Activated B cell treated with CpG ODN at 0.5 μM for 24 hours (primary cell): ENCODE measurements at regions of chr4 and their contacts with region 1.

Region 1: GRCh38 chr4:118772081-118772766 is 63.7 kb downstream of the SEC24D start:
- DNase-seq: no peak
- ATAC-seq: peak; percentile 71
- H3K4me3 Mint-ChIP-seq: no peak overlapping the region
- H3K27ac Mint-ChIP-seq: no peak overlapping the region
- H3K4me1 Mint-ChIP-seq: peaks cover 2% of the 10 kb centered on the region
- H3K27me3 Mint-ChIP-seq: no peaks in the 10 kb centered on the region
- CTCF ChIP-seq: peak; percentile 24

Region 2: DNA sequence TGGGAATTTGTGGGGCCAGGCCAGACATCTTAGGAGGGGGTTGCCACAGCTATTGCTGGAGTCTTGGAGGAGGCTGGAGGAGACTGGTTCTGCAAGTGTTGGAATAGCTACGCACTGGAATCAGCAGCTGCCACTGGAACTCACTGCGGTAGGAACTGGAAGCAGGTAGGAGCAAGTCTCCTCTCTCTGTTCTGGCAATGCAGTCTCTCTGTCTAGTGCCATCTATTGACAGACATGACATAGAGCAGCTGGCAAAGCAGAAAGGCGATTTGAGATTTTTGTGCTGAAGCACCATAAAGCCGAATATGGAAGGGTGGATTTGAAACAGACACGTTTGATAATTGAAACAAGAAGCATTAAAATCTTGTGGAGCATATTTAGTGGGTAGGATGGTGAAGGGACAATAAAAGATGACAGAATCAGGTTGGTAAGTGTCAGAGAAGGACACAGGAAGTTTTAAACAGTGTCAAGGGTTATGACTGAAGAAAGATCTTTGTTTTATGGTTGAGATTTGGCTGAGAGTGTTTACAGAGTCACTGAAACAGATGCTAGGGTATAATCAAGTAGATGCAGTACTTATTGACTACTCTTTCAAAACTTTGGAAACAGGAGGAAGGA is 93.0 kb after region 1 on chr4:
- CTCF ChIA-PET with region 1: interaction called, 8 read pairs
- POLR2A ChIA-PET with region 1: no interaction called
- intact Hi-C with region 1: loop called (anchors 1 kb)
- DNase-seq: no peak
- ATAC-seq: no peak
- H3K4me3 Mint-ChIP-seq: no peak overlapping the region
- H3K27ac Mint-ChIP-seq: no peak overlapping the region
- H3K4me1 Mint-ChIP-seq: no peaks in the 10 kb centered on the region
- H3K27me3 Mint-ChIP-seq: no peaks in the 10 kb centered on the region
- CTCF ChIP-seq: no peak

Region 3: GRCh38 chr4:118888666-118889311 is 116.6 kb after region 1 on chr4 and contains the start of gene SYNPO2:
- CTCF ChIA-PET with region 1: interaction called, 49 read pairs
- POLR2A ChIA-PET with region 1: no interaction called
- intact Hi-C with region 1: loop called (anchors 1 kb)
- DNase-seq: peak; percentile 22
- ATAC-seq: peak; percentile 47
- H3K4me3 Mint-ChIP-seq: peak within 1 kb of the TSS; percentile 75
- H3K27ac Mint-ChIP-seq: no peak within 1 kb of the TSS
- H3K4me1 Mint-ChIP-seq: peaks cover 16% of the 10 kb centered on the region
- H3K27me3 Mint-ChIP-seq: peaks cover 37% of the 10 kb centered on the region
- CTCF ChIP-seq: no peak
- total RNA-seq, gene SYNPO2: 0.18 and 0.24 TPM in 2 replicates

Region 4: GRCh38 chr4:118981839-118982381 is 209.7 kb after region 1 on chr4:
- CTCF ChIA-PET with region 1: no interaction called
- POLR2A ChIA-PET with region 1: no interaction called
- intact Hi-C with region 1: loop called (anchors 1 kb)
- DNase-seq: no peak
- ATAC-seq: peak; percentile 57
- H3K4me3 Mint-ChIP-seq: no peak overlapping the region
- H3K27ac Mint-ChIP-seq: no peak overlapping the region
- H3K4me1 Mint-ChIP-seq: no peaks in the 10 kb centered on the region
- H3K27me3 Mint-ChIP-seq: peaks cover 4% of the 10 kb centered on the region
- CTCF ChIP-seq: no peak

Region 5: GRCh38 chr4:119041951-119042560 is 269.8 kb after region 1 on chr4:
- CTCF ChIA-PET with region 1: no interaction called
- POLR2A ChIA-PET with region 1: no interaction called
- intact Hi-C with region 1: loop called (anchors 1 kb)
- DNase-seq: no peak
- ATAC-seq: peak; percentile 83
- H3K4me3 Mint-ChIP-seq: no peak overlapping the region
- H3K27ac Mint-ChIP-seq: no peak overlapping the region
- H3K4me1 Mint-ChIP-seq: peaks cover 5% of the 10 kb centered on the region
- H3K27me3 Mint-ChIP-seq: no peaks in the 10 kb centered on the region
- CTCF ChIP-seq: no peak

Region 6: DNA sequence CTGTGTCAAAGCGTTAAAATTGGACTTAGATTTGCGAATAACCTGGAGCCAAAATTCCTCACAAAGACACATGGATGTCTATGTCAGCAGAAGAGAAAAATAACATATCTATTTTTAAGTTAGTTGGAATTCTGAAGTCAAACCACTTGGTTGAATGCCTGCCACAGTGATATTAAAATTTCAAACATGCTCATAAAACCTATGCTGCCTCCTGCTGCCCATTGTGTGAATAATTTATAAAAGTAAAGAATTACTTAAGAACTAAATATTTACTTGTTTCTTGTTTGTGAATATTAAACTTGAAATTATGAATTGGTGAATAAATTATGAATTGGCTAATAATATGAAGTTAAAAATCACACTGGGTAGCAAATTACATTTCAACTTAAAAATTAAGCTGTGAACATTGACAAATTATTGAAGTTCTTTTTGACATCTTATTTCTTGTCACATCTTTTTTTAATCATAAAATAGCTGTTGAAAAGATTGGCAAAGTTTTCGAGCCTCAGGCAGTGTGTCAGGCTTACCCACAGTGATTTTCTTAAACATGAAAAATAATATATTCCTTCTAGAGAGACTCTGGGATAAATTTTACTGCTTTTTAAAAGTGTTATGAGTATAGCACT is 514.3 kb after region 1 on chr4:
- CTCF ChIA-PET with region 1: no interaction called
- POLR2A ChIA-PET with region 1: no interaction called
- intact Hi-C with region 1: loop called (anchors 2 kb)
- DNase-seq: no peak
- ATAC-seq: no peak
- H3K4me3 Mint-ChIP-seq: no peak overlapping the region
- H3K27ac Mint-ChIP-seq: no peak overlapping the region
- H3K4me1 Mint-ChIP-seq: peaks cover 14% of the 10 kb centered on the region
- H3K27me3 Mint-ChIP-seq: no peaks in the 10 kb centered on the region
- CTCF ChIP-seq: peak; percentile 66

Region 7: GRCh38 chr4:120049732-120050494 is 1277.7 kb after region 1 on chr4:
- CTCF ChIA-PET with region 1: interaction called, 3 read pairs
- POLR2A ChIA-PET with region 1: no interaction called
- intact Hi-C with region 1: loop called (anchors 1 kb)
- DNase-seq: peak; percentile 30
- ATAC-seq: peak; percentile 93
- H3K4me3 Mint-ChIP-seq: peak overlapping the region; percentile 59
- H3K27ac Mint-ChIP-seq: no peak overlapping the region
- H3K4me1 Mint-ChIP-seq: peaks cover 12% of the 10 kb centered on the region
- H3K27me3 Mint-ChIP-seq: no peaks in the 10 kb centered on the region
- CTCF ChIP-seq: peak; percentile 91